ENCODE measurements at regions of chr19 and their contacts with region 1.

Region 1: DNA sequence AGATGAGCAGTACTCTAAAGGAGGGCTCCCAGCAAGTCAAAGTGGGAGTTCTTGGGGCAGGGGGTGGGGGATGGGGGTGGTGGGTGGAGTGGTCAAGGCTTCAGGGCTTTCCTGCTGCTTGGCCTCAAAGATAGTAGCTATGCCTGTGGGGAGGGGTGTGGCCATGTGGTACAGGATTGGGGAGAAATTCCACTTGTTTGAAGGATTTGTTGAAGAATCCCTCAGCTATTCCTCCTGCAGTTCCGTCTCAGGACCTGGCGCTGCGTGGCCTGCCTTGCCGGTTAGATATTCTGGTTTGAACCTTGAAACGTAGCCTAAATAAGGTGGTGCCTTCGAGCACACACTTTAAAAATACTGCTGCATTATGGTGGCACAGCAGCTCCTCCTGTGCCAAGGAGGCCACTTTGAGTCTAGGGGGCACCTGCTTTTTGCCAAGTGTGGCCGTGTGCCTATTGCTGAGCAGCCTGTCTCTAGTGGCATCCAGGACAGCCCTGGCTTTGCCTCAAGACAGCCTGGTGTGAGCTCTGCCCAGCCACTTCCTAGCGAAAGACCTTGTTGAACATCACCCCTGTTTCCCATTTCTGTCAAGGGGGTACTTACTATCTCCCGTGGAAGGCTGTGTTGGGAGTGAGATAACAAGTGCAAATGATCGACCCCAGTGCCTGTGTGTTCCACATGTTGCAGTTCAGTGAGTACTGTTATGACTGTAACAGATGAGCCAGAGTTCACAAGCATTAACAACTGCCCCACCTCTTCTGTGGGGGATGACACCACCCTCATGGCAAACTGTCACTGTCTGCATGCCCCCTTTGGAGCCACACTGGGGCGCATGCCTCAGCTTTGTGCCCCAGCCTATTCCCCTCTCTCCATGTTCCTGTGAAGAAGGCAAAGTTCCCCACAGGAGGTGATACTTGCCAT is 5.1 kb downstream of the GATAD2A start:
- DNase-seq: no peak
- ATAC-seq: no peak
- H3K4me3 ChIP-seq: no peak overlapping the region
- H3K4me3 Mint-ChIP-seq: peak overlapping the region; percentile 6
- H3K27ac ChIP-seq: no peak overlapping the region
- H3K27ac Mint-ChIP-seq: peak overlapping the region; percentile 50
- H3K4me1 ChIP-seq: peaks cover 27 to 48% of the 10 kb centered on the region in 2 donors
- H3K4me1 Mint-ChIP-seq: peaks cover 65% of the 10 kb centered on the region
- H3K27me3 ChIP-seq: no peaks in the 10 kb centered on the region
- H3K27me3 Mint-ChIP-seq: no peaks in the 10 kb centered on the region
- CTCF ChIP-seq: no peak

Region 2: GRCh38 chr19:19399733-19400433 is 10.7 kb before region 1 on chr19:
- CTCF ChIA-PET with region 1: interaction called, 5 read pairs
- POLR2A ChIA-PET with region 1: interaction called, 11 read pairs
- intact Hi-C with region 1: no loop called
- DNase-seq: no peak
- ATAC-seq: no peak
- H3K4me3 ChIP-seq: no peak overlapping the region
- H3K4me3 Mint-ChIP-seq: no peak overlapping the region
- H3K27ac ChIP-seq: no peak overlapping the region
- H3K27ac Mint-ChIP-seq: no peak overlapping the region
- H3K4me1 ChIP-seq: peaks cover 4 to 5% of the 10 kb centered on the region in 2 donors
- H3K4me1 Mint-ChIP-seq: peaks cover 8% of the 10 kb centered on the region
- H3K27me3 ChIP-seq: no peaks in the 10 kb centered on the region
- H3K27me3 Mint-ChIP-seq: no peaks in the 10 kb centered on the region
- CTCF ChIP-seq: no peak